ENCODE measurements at regions of chr1 and their contacts with region 1.

Region 1: GRCh38 chr1:67430352-67431155 is at the start of gene SERBP1:
- DNase-seq: peak; percentile 91 to 98
- ATAC-seq: peak; percentile 82 to 95 (median 85)
- H3K4me3 ChIP-seq: peak within 1 kb of the TSS; percentile 80
- H3K4me3 Mint-ChIP-seq: peak within 1 kb of the TSS; percentile 100
- H3K27ac ChIP-seq: peak within 1 kb of the TSS; percentile 98
- H3K27ac Mint-ChIP-seq: peak within 1 kb of the TSS; percentile 99 to 100
- H3K4me1 ChIP-seq: peaks cover 5% of the 10 kb centered on the region
- H3K4me1 Mint-ChIP-seq: peaks cover 60 to 62% of the 10 kb centered on the region in 2 donors
- H3K27me3 ChIP-seq: no peaks in the 10 kb centered on the region
- H3K27me3 Mint-ChIP-seq: peaks cover 0 to 7% of the 10 kb centered on the region in 2 donors
- CTCF ChIP-seq: no peak
- total RNA-seq, gene SERBP1: 137 to 183 (median 149) TPM

Region 2: GRCh38 chr1:67194209-67194863 is 236.2 kb before region 1 on chr1:
- intact Hi-C with region 1: loop called (anchors 5 kb)
- DNase-seq: peak in 1 of 2 donors; percentile 74
- ATAC-seq: peak; percentile 73 to 80 (median 73)
- H3K4me3 ChIP-seq: no peak overlapping the region
- H3K4me3 Mint-ChIP-seq: peak overlapping the region; percentile 81
- H3K27ac ChIP-seq: peak overlapping the region; percentile 66
- H3K27ac Mint-ChIP-seq: no peak overlapping the region
- H3K4me1 ChIP-seq: peaks cover 24% of the 10 kb centered on the region
- H3K4me1 Mint-ChIP-seq: peaks cover 16 to 18% of the 10 kb centered on the region in 2 donors
- H3K27me3 ChIP-seq: no peaks in the 10 kb centered on the region
- H3K27me3 Mint-ChIP-seq: peaks cover 0 to 5% of the 10 kb centered on the region in 2 donors
- CTCF ChIP-seq: no peak

Region 3: DNA sequence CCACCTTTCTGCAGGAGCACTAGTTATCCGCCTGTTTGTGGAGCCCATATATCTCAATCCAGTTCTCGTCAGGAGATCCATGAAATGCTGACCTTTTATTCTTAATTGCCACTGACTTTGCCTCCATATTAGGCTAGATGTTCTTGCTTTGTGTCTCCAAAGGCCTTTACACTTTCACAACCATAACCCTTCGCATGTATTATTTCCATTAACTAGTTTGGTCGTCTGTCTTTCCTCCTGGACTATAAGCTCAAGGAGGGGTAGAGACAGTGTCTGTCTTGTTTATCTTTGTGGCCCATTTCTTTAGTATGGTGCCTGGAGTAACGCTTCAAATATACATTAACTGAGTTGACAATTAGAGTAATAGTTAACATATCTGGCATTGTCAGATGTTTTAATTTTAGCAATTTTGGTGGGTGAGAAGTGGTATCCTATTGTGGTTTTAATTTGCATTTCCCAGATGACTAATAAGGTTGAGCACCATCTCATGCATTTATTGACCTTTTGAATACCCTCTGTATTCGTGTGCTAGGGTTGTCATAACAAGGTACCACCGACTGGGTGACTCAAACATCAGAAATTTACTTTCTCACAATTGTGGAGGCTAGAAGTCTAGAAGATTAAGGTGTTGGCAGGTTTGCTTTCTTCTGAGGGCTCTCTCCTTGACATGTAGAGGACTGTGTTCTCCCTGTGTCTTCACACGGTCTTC is 144.6 kb before region 1 on chr1:
- intact Hi-C with region 1: loop called (anchors 1 kb)
- DNase-seq: peak in 1 of 2 donors; percentile 23
- ATAC-seq: peak; percentile 75 to 97 (median 96)
- H3K4me3 ChIP-seq: no peak overlapping the region
- H3K4me3 Mint-ChIP-seq: peak overlapping the region; percentile 14
- H3K27ac ChIP-seq: no peak overlapping the region
- H3K27ac Mint-ChIP-seq: peak overlapping the region; percentile 70 to 79
- H3K4me1 ChIP-seq: no peaks in the 10 kb centered on the region
- H3K4me1 Mint-ChIP-seq: peaks cover 22 to 33% of the 10 kb centered on the region in 2 donors
- H3K27me3 ChIP-seq: no peaks in the 10 kb centered on the region
- H3K27me3 Mint-ChIP-seq: no peaks in the 10 kb centered on the region
- CTCF ChIP-seq: peak; percentile 37

Region 4: DNA sequence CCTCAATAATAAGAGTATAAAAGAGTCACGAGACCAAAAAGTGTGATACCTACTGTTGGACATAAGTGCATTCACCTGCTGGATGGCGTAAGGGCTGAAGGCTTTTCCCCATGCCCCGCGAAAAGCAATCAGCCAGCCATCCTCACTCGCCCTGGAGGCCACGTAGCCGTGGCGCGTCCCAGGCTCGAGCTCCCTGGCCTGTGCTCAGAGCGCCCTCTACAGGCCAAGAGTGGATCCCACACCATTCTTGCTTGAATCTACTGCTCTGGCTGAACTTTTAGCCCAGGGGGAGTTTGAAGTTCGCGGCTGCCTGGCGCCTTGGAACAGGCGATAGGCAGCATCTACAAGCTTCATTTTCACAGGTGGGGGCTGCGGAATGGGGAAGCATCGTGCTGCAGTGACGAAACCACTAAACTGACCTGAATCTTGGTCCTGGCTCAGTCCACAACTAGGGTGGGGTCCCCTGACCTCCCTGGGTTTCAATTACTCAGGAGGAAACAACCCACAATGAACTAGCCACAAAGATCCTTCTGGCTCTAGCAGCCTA is 69.9 kb after region 1 on chr1:
- intact Hi-C with region 1: loop called (anchors 1 kb)
- DNase-seq: peak; percentile 83 to 93
- ATAC-seq: peak; percentile 99 to 100 (median 100)
- H3K4me3 ChIP-seq: no peak overlapping the region
- H3K4me3 Mint-ChIP-seq: no peak overlapping the region
- H3K27ac ChIP-seq: no peak overlapping the region
- H3K27ac Mint-ChIP-seq: peak overlapping the region in 1 of 2 donors; percentile 68
- H3K4me1 ChIP-seq: peaks cover 6% of the 10 kb centered on the region
- H3K4me1 Mint-ChIP-seq: peaks cover 0 to 15% of the 10 kb centered on the region in 2 donors
- H3K27me3 ChIP-seq: no peaks in the 10 kb centered on the region
- H3K27me3 Mint-ChIP-seq: peaks cover 0 to 2% of the 10 kb centered on the region in 2 donors
- CTCF ChIP-seq: peak; percentile 96

Measured in natural killer cell (primary cell).